ENCODE measurements at regions of chr12 and their contacts with region 1.

Region 1: DNA sequence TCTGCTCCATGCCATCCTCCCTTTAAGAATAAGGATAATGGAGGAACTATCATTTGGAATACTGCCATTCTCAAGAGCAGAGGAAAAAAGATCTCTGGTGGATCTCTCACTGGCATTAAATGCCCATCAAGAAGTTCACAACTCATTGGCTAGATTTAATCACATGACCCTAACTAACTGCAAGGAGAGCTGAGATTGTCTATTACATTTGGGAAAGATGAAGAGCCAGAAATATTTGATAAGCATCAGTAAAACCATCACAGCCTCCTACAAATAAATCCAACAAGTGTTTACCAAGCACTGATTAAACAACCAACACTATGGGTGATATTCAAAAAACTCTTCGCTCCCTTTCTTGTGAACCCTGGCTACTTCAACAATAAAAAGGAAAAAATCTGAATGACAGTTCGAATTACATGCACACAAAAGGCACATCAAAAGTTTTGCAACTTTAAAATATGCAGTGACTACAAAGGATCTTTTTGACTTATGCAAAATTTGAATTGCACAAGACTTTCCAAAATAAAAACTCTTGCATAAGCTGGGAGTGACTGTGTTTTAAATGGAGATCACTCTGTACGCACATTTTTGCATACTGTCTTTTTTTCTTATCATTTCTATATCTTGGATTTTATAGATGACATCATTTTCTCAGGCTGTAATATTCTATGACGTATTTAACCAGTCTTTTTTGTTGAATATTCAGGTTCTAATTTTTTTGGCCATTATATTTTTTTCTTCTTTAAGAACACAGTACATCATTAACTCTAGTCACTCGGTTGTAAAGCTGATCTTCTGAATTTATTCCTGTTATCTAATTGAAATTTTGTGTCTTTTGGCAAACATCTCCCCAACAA is 667.5 kb upstream of the TBX3 start:
- DNase-seq: no peak
- H3K4me3 ChIP-seq: no peak overlapping the region
- H3K27ac ChIP-seq: no peak overlapping the region
- H3K4me1 ChIP-seq: peaks cover 0 to 3% of the 10 kb centered on the region in 2 donors
- H3K27me3 ChIP-seq: no peaks in the 10 kb centered on the region
- CTCF ChIP-seq: no peak
- POLR2A ChIP-seq: no peak

Region 2: DNA sequence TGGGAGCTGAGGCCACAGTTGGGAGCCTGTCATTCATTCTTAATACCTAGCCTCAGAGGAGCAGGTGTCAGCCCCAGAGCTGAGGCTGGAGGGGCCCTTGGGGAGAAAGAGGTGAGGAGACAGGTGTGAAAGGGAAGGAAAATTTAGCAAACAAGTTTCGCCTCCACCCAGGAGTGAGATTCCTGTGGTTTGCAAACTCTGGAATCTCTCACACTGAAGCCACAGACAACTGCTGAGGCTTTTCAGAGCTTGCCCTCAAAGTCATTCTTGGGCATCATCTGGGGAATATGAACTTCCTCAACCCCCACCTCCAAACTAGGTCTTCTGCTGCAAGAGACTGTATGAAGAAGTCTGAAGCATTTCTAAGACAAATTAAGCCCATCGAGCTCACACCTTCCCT is 78.0 kb before region 1 on chr12:
- intact Hi-C with region 1: loop called (anchors 2 kb)
- DNase-seq: no peak
- H3K4me3 ChIP-seq: no peak overlapping the region
- H3K27ac ChIP-seq: no peak overlapping the region
- H3K4me1 ChIP-seq: no peaks in the 10 kb centered on the region
- H3K27me3 ChIP-seq: no peaks in the 10 kb centered on the region
- CTCF ChIP-seq: no peak
- POLR2A ChIP-seq: no peak